ENCODE measurements at regions of chr6 and their contacts with region 1.

Region 1: DNA sequence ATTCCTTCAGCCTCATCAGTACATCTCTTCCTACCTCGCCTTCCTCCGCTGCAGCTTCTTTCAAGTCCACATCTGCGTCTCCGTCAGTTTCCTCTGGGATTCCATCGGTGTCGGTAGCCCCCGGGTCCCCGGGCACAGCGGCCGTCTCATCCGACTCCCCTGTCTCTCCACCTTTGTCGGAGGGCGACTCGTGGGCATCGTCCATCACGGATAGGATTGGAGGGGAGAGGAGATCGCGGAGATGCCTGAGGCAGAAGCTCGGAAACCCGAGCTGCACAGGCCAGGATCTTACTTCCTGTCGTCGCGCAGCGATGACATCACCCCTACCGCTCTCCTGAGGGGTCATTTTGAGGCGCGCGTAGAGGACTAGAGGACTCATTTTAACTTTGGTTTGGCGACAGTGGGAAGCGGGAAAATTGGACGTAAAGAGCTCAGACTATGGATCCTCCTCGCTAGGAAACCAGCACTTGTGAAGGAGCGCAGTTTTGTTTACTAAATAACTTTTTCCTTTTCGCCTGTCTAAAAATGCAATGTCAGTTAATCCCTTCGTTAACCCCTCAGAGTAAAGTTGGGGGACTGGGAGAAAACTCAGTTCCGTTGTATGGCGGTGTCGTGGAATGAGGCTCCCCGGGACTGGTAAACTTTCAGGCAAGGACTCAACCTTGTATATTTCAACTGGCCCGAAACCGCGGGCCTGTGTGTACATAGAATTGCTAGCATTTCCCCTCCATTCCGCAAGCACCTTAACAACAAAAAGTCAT is at the start of gene TAF11:
- DNase-seq: peak; percentile 93
- ATAC-seq: peak; percentile 71
- H3K4me3 ChIP-seq: peak within 1 kb of the TSS; percentile 61 to 99 (median 80)
- H3K4me3 Mint-ChIP-seq: peak within 1 kb of the TSS; percentile 99
- H3K27ac ChIP-seq: peak within 1 kb of the TSS; percentile 76 to 92
- H3K27ac Mint-ChIP-seq: peak within 1 kb of the TSS; percentile 92
- H3K4me1 ChIP-seq: peaks cover 21 to 28% of the 10 kb centered on the region in 2 donors
- H3K4me1 Mint-ChIP-seq: peaks cover 46% of the 10 kb centered on the region
- H3K27me3 ChIP-seq: no peaks in the 10 kb centered on the region
- H3K27me3 Mint-ChIP-seq: no peaks in the 10 kb centered on the region
- CTCF ChIP-seq: no peak
- total RNA-seq, gene TAF11: 28.5 and 32.5 TPM in 2 replicates

Region 2: DNA sequence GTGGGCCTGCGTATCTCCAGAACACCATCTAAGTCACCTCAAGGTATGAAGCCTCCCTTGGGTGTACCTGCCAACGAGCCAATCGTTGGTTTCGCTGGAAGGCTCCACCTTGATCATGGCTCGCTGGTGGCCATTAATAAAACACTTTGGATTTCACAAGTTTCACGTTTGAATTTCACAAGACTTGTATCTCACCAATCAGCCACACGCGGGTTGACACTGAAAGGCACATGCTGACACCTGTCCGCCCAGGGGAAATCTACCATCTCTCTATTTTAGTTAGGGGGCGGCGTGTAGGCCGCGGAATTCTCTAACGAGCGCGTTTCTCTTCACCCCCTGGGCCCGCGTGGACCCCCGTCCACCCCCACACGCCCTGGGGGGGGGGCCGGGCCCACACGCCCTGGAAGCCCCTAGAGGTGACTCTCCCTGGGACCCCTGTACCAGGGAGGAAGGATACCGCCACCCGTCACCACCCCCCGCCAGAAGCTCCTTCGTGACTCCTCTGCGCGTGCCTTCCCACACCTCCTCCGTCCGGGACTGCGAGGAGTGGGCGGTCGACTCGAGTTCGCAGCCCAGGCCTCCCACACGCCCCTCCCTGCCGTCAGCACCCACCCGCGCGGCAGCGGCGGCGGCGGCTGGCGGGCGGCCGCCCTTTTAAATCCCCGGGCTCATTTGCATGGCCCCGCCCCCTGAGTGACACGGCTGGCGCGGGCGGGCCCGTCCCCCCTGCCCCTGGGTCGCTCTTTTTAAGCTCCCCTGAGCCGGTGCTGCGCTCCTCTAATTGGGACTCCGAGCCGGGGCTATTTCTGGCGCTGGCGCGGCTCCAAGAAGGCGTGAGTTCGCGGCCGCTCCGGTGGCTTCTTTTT is 651.6 kb before region 1 on chr6 and contains the start of gene HMGA1:
- CTCF ChIA-PET with region 1: no interaction called
- POLR2A ChIA-PET with region 1: no interaction called
- intact Hi-C with region 1: loop called (anchors 10 kb)
- DNase-seq: peak; percentile 96
- ATAC-seq: peak; percentile 76
- H3K4me3 ChIP-seq: peak within 1 kb of the TSS; percentile 64 to 93 (median 88)
- H3K4me3 Mint-ChIP-seq: peak within 1 kb of the TSS; percentile 92
- H3K27ac ChIP-seq: peak within 1 kb of the TSS; percentile 96 to 98
- H3K27ac Mint-ChIP-seq: peak within 1 kb of the TSS; percentile 98
- H3K4me1 ChIP-seq: peaks cover 22 to 30% of the 10 kb centered on the region in 2 donors
- H3K4me1 Mint-ChIP-seq: peaks cover 34% of the 10 kb centered on the region
- H3K27me3 ChIP-seq: no peaks in the 10 kb centered on the region
- H3K27me3 Mint-ChIP-seq: no peaks in the 10 kb centered on the region
- CTCF ChIP-seq: no peak
- total RNA-seq, gene HMGA1: 66.4 and 72.3 TPM in 2 replicates

Region 3: DNA sequence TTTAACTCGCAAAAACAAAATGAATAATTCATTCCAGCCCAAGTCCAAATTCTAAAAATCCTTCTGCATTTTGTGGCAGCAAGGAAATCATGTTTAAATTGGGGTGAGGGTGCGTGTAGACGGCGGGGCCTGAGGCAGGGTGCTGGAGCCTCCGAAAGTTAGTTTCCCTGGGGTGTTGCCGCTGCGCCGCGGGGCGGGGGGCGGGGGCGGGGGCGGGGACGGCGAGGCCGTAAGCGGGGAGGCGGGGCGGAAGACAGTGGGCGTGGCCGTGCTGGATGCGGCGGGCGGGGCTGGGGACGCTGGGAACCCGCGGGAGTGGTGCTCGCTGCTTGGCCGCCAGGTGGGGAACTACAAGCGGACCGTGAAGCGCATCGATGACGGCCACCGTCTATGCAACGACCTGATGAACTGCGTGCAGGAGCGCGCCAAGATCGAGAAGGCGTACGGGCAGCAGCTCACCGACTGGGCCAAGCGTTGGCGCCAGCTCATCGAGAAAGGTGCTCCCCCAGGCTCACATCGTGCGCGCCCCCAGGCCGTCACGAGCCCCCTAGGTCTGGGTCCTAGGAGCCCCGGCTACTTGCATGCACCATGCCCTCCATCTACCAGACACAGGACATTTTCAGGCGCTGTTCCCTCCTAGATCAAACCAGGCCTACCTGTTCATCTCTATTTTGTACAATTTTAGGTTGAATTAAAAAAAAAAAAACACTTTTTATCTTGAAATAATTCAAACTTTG is 360.8 kb before region 1 on chr6:
- CTCF ChIA-PET with region 1: no interaction called
- POLR2A ChIA-PET with region 1: no interaction called
- intact Hi-C with region 1: loop called (anchors 1 kb)
- DNase-seq: peak; percentile 96
- ATAC-seq: peak; percentile 99
- H3K4me3 ChIP-seq: peak overlapping the region in 4 of 5 experiments; percentile 11 to 44 (median 30)
- H3K4me3 Mint-ChIP-seq: peak overlapping the region; percentile 71
- H3K27ac ChIP-seq: peak overlapping the region in 1 of 2 donors; percentile 22
- H3K27ac Mint-ChIP-seq: peak overlapping the region; percentile 78
- H3K4me1 ChIP-seq: peaks cover 7 to 13% of the 10 kb centered on the region in 2 donors
- H3K4me1 Mint-ChIP-seq: peaks cover 10% of the 10 kb centered on the region
- H3K27me3 ChIP-seq: no peaks in the 10 kb centered on the region
- H3K27me3 Mint-ChIP-seq: no peaks in the 10 kb centered on the region
- CTCF ChIP-seq: peak; percentile 65

Region 4: GRCh38 chr6:34696739-34697543 is 191.0 kb before region 1 on chr6 and contains the start of gene ILRUN:
- CTCF ChIA-PET with region 1: no interaction called
- POLR2A ChIA-PET with region 1: no interaction called
- intact Hi-C with region 1: loop called (anchors 2 kb)
- DNase-seq: peak; percentile 99
- ATAC-seq: peak; percentile 89
- H3K4me3 ChIP-seq: peak within 1 kb of the TSS; percentile 95 to 99 (median 98)
- H3K4me3 Mint-ChIP-seq: peak within 1 kb of the TSS; percentile 96
- H3K27ac ChIP-seq: peak within 1 kb of the TSS; percentile 95 to 96
- H3K27ac Mint-ChIP-seq: peak within 1 kb of the TSS; percentile 99
- H3K4me1 ChIP-seq: peaks cover 24 to 38% of the 10 kb centered on the region in 2 donors
- H3K4me1 Mint-ChIP-seq: peaks cover 43% of the 10 kb centered on the region
- H3K27me3 ChIP-seq: no peaks in the 10 kb centered on the region
- H3K27me3 Mint-ChIP-seq: no peaks in the 10 kb centered on the region
- CTCF ChIP-seq: no peak
- total RNA-seq, gene ILRUN: 71.3 and 76.4 TPM in 2 replicates

Region 5: DNA sequence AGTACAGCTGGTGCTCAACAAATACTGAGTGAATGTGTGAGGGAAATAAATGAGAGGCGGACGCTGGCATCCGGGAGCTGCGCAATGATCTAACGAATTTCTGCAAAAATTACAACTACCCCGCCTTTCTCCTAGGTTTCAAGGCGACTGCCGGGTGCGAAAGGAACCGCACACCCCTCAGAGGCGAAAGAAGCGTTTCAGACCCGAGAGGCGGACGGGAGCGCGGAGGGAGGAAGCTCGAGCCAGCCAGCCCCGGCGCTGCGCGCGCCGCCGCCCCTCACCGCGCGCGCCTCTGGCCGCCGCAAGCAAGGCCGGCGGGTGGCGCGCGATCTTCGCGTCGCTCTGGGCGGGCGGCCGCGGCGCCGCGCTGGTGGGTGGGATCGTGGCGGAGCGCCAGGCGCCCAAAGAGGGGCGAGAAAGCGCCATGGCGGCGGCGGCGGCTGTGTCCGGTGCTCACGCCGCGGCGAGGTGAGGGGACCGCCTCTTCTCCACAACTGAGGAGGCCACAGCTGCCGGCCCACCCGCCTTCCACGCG is 96.2 kb before region 1 on chr6 and contains the start of gene BLTP3A:
- CTCF ChIA-PET with region 1: interaction called, 4 read pairs
- POLR2A ChIA-PET with region 1: no interaction called
- intact Hi-C with region 1: loop called (anchors 1 kb)
- DNase-seq: peak; percentile 90
- ATAC-seq: peak; percentile 93
- H3K4me3 ChIP-seq: peak within 1 kb of the TSS; percentile 81 to 93 (median 90)
- H3K4me3 Mint-ChIP-seq: peak within 1 kb of the TSS; percentile 94
- H3K27ac ChIP-seq: peak within 1 kb of the TSS; percentile 71 to 83
- H3K27ac Mint-ChIP-seq: peak within 1 kb of the TSS; percentile 94
- H3K4me1 ChIP-seq: peaks cover 17 to 19% of the 10 kb centered on the region in 2 donors
- H3K4me1 Mint-ChIP-seq: peaks cover 22% of the 10 kb centered on the region
- H3K27me3 ChIP-seq: no peaks in the 10 kb centered on the region
- H3K27me3 Mint-ChIP-seq: no peaks in the 10 kb centered on the region
- CTCF ChIP-seq: no peak
- total RNA-seq, gene BLTP3A: 11.3 and 13.2 TPM in 2 replicates

Region 6: DNA sequence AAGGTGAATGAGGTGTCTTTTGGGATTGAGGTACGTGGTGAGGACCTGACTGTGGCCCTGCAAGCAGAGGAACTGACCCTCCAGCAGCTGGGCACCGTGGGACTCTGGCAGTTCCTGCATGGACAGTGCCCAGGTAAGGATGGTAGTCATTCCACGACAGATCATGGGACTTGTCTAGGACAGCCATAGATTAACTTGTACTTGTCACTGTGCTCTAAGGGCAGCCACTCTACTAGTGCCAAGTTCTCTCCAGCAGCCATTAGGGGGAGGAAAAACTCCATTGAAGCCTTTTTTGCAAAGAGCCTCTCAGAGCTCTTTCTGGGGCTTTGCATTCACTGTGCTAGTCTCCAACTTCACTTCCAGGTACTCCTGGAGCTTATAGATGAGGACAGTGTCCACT is 20.4 kb before region 1 on chr6:
- CTCF ChIA-PET with region 1: no interaction called
- POLR2A ChIA-PET with region 1: interaction called, 13 read pairs
- intact Hi-C with region 1: no loop called
- DNase-seq: no peak
- ATAC-seq: no peak
- H3K4me3 ChIP-seq: no peak overlapping the region
- H3K4me3 Mint-ChIP-seq: no peak overlapping the region
- H3K27ac ChIP-seq: no peak overlapping the region
- H3K27ac Mint-ChIP-seq: no peak overlapping the region
- H3K4me1 ChIP-seq: no peaks in the 10 kb centered on the region
- H3K4me1 Mint-ChIP-seq: no peaks in the 10 kb centered on the region
- H3K27me3 ChIP-seq: no peaks in the 10 kb centered on the region
- H3K27me3 Mint-ChIP-seq: no peaks in the 10 kb centered on the region
- CTCF ChIP-seq: no peak

Region 7: GRCh38 chr6:34912715-34913464 is 25.0 kb after region 1 on chr6:
- CTCF ChIA-PET with region 1: no interaction called
- POLR2A ChIA-PET with region 1: no interaction called
- intact Hi-C with region 1: loop called (anchors 2 kb)
- DNase-seq: peak; percentile 46
- ATAC-seq: peak; percentile 70
- H3K4me3 ChIP-seq: no peak overlapping the region
- H3K4me3 Mint-ChIP-seq: peak overlapping the region; percentile 42
- H3K27ac ChIP-seq: no peak overlapping the region
- H3K27ac Mint-ChIP-seq: peak overlapping the region; percentile 21
- H3K4me1 ChIP-seq: peaks cover 11 to 14% of the 10 kb centered on the region in 2 donors
- H3K4me1 Mint-ChIP-seq: peaks cover 15% of the 10 kb centered on the region
- H3K27me3 ChIP-seq: no peaks in the 10 kb centered on the region
- H3K27me3 Mint-ChIP-seq: no peaks in the 10 kb centered on the region
- CTCF ChIP-seq: no peak

Measured in B cell (primary cell).